ENCODE measurements at regions of chr9 and their contacts with region 1.

Region 1: GRCh38 chr9:70352802-70353201 is 61.7 kb downstream of the KLF9 start:
- DNase-seq: no peak
- H3K4me3 ChIP-seq: no peak overlapping the region
- H3K27ac ChIP-seq: peak overlapping the region in 1 of 4 donors; percentile 55
- H3K4me1 ChIP-seq: peaks cover 0 to 28% (median 21%) of the 10 kb centered on the region in 4 donors
- H3K27me3 ChIP-seq: no peaks in the 10 kb centered on the region
- CTCF ChIP-seq: peak; percentile 72 to 80 (median 79)
- EP300 ChIP-seq: no peak
- POLR2A ChIP-seq: no peak

Region 2: DNA sequence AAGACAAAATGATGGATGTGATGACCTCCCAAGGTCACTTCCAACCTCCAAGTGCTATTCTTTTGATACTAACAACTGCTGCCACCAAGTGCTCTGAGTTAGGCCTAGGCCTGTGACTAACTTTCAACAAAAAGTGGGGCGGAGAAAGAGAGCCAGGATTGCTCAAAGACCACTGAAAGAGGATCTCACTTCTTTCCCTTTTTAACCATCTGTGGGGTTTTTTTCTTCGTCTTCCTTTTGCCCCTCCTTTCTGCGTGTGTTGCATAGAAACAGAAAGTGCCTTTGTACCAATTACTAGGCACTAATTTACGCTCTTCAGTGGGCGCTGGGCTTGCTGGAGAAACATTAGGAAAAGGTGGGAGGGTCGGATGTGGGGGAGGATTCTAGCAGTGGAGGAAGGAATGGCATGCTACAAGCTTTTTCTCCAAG is 53.6 kb after region 1 on chr9:
- intact Hi-C with region 1: loop called (anchors 5 kb)
- DNase-seq: no peak
- H3K4me3 ChIP-seq: peak overlapping the region; percentile 18 to 49 (median 36)
- H3K27ac ChIP-seq: peak overlapping the region; percentile 62 to 81 (median 73)
- H3K4me1 ChIP-seq: peaks cover 77 to 87% (median 82%) of the 10 kb centered on the region in 4 donors
- H3K27me3 ChIP-seq: no peaks in the 10 kb centered on the region
- CTCF ChIP-seq: no peak
- EP300 ChIP-seq: no peak
- POLR2A ChIP-seq: no peak

Region 3: GRCh38 chr9:70510157-70510770 is 157.5 kb after region 1 on chr9:
- intact Hi-C with region 1: loop called (anchors 10 kb)
- DNase-seq: no peak
- H3K4me3 ChIP-seq: no peak overlapping the region
- H3K27ac ChIP-seq: no peak overlapping the region
- H3K4me1 ChIP-seq: peaks cover 0 to 18% (median 0%) of the 10 kb centered on the region in 4 donors
- H3K27me3 ChIP-seq: no peaks in the 10 kb centered on the region
- CTCF ChIP-seq: peak; percentile 46 to 61 (median 48)
- EP300 ChIP-seq: no peak
- POLR2A ChIP-seq: no peak

Measured in esophagus muscularis mucosa (tissue), 4 donors.